Aorta (tissue), 5 donors: ENCODE measurements at regions of chr4 and their contacts with region 1.

Region 1: DNA sequence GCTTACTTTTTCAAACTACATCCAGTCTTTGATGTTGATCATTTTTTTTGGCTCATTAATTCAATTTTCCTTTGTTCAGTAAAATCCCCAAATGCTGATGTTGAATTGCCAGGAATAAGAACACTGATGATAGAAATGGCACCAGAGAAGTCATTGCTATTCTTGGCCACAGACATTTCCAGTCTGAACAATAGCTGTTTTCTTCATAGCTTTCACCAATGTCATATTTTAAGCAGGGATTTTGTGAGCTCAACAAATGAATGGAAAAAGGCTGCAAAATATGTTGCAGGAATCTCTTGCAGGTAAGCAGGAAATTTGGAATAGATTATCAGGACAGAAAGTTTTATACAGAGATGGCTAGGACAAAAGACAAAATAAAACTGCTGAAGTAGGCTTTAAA is 40.5 kb upstream of the GLRB start:
- DNase-seq: no peak
- ATAC-seq: no peak
- H3K4me3 ChIP-seq: no peak overlapping the region
- H3K27ac ChIP-seq: no peak overlapping the region
- H3K4me1 ChIP-seq: peaks cover 0 to 4% of the 10 kb centered on the region in 2 donors
- H3K27me3 ChIP-seq: no peaks in the 10 kb centered on the region

Region 2: GRCh38 chr4:156800463-156800862 is 235.0 kb before region 1 on chr4:
- intact Hi-C with region 1: no loop called
- DNase-seq: no peak
- ATAC-seq: no peak
- H3K4me3 ChIP-seq: no peak overlapping the region
- H3K27ac ChIP-seq: no peak overlapping the region
- H3K4me1 ChIP-seq: no peaks in the 10 kb centered on the region
- H3K27me3 ChIP-seq: no peaks in the 10 kb centered on the region

Region 3: GRCh38 chr4:156999175-156999516 is 36.3 kb before region 1 on chr4:
- intact Hi-C with region 1: loop called in 1 of 2 experiments (anchors 2 kb)
- DNase-seq: no peak
- ATAC-seq: peak; percentile 72
- H3K4me3 ChIP-seq: no peak overlapping the region
- H3K27ac ChIP-seq: peak overlapping the region in 1 of 2 donors; percentile 88
- H3K4me1 ChIP-seq: no peaks in the 10 kb centered on the region
- H3K27me3 ChIP-seq: no peaks in the 10 kb centered on the region

Region 4: DNA sequence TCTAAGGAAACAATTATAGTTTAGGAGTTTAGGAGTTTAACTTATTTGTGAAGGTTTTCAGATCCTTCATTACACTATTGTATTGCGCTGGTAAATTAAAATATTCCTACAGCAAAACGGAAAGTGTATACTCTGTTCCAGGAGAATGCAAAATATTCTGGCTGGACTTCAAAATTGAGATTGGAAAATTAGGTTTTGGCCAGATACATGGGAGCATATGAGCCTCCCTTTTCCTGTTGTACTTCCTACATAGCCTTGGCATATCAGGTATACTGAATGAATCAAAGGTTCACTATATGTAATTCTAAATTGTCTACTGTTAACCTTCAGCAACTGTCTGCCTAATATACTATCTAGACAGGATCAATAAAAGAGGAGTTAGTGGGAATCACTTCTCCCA is 159.9 kb after region 1 on chr4:
- intact Hi-C with region 1: no loop called
- DNase-seq: no peak
- ATAC-seq: no peak
- H3K4me3 ChIP-seq: no peak overlapping the region
- H3K27ac ChIP-seq: no peak overlapping the region
- H3K4me1 ChIP-seq: no peaks in the 10 kb centered on the region
- H3K27me3 ChIP-seq: no peaks in the 10 kb centered on the region